Activated naive CD4-positive, alpha-beta T cell treated with anti-CD3 and anti-CD28 coated beads for 36 hours (primary cell): ENCODE measurements at regions of chr18 and their contacts with region 1.

Region 1: GRCh38 chr18:12702221-12703095 is at the starts of genes CEP76 and PSMG2:
- DNase-seq: peak; percentile 80
- H3K4me3 Mint-ChIP-seq: peak within 1 kb of the TSS; percentile 97
- H3K27ac Mint-ChIP-seq: peak within 1 kb of the TSS; percentile 97
- H3K4me1 Mint-ChIP-seq: peaks cover 41% of the 10 kb centered on the region
- H3K27me3 Mint-ChIP-seq: no peaks in the 10 kb centered on the region
- total RNA-seq, gene CEP76: 14.8 to 18.0 TPM
- total RNA-seq, gene PSMG2: 99.2 to 107 TPM

Region 2: DNA sequence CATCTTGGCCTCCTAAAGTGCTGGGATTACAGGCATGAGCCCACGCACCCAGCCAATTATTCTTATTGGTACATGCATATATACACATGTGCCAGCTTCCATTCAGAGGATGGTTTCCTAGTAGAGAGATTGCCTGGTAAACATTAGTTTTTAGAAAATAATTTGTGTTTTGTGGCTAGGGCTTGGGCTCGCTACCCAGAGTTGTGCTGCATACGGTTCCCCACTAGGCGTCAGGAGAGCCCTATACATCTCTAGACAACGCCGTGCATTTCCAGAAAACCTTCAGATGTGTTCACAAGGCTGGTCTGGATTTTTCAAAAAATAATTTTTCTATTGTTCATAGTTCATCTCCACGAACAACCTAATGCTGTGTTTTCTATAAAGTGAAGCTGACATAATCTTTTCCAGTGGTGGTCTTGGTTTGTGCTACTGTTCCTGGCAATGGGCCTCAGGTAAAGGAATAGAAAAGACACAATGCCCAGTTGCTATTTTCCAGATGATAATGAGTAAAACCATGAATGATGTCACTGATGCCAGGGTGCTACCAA is 310.8 kb before region 1 on chr18:
- CTCF ChIA-PET with region 1: interaction called, 4 read pairs
- intact Hi-C with region 1: loop called (anchors 5 kb)
- DNase-seq: peak; percentile 72
- H3K4me3 Mint-ChIP-seq: no peak overlapping the region
- H3K27ac Mint-ChIP-seq: no peak overlapping the region
- H3K4me1 Mint-ChIP-seq: no peaks in the 10 kb centered on the region
- H3K27me3 Mint-ChIP-seq: peaks cover 4% of the 10 kb centered on the region

Region 3: DNA sequence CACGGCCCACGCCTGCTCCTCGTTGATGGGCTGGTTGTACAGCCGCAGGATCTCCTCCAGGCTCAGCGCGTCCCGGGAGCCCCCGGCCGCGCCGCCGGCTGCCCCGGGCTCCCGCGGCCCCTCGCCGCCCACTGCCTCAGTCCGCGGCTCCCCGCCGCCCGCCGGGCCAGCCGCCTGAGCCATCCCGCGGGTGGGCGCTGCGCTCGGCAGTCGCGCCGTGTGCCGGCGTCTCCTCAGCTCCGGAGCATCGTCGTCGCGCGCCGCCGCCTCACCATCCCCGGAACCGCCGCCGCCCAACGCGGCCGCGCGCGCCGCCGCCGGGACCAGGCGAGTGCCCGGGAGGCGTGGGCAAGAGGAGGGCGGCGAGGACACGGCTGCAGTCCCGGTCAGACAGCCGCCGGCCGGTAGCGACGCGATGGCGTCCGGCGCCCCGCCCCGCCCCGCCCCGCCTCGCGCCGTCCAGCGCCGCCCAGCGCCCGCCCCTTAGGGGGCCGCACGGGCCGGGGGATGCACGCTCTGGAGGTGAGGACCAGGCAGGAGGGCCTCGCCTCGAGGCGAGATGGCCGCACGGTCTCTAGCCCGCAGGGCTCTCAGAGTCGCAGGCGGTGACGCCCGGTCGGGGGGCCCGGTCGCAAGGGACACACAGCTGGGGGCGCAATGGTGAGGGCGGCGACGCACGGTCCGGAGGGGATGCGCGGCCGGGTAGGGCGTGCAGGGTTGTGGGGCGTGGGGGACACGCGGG is 44.6 kb before region 1 on chr18 and contains the start of gene SPIRE1:
- CTCF ChIA-PET with region 1: no interaction called
- intact Hi-C with region 1: loop called (anchors 1 kb)
- DNase-seq: peak; percentile 34
- H3K4me3 Mint-ChIP-seq: peak within 1 kb of the TSS; percentile 76
- H3K27ac Mint-ChIP-seq: no peak within 1 kb of the TSS
- H3K4me1 Mint-ChIP-seq: peaks cover 7% of the 10 kb centered on the region
- H3K27me3 Mint-ChIP-seq: peaks cover 22% of the 10 kb centered on the region
- total RNA-seq, gene SPIRE1: 1.3 to 1.7 TPM

Region 4: DNA sequence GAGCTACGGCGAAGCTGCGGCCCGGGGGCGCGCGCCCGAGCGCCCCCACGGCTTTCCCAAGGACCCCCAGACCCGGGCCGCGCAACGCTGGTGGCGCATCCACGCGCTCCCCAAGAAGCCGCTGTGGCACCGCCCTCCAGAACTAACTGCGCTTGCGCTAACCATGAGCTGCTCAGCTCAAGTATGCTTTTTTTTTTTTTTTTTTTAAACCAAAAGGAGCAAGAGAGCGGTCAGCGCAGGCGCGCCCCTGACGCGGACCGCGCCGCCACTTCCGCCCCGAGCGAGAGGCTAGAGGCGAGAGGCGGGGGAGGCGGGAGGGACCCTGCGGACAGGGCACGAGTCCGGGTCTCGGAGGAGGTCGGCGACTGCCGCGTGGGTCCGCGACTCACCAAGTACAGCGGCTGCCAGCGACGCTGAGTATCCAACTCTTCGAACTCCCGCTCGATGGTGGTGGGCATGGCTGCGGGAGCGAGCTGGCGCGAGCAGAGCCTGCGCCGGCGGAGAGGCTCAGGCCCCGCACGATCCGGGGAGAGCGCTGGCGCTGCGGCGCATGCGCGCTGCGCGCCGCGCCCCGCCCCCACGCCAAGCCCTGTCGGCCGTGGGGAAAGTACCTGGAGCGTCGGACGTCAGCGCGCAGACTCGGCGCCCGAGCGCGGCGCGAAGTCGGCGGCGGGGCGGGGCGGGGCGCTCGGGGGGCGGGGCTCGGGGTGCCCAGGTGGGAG is 181.4 kb after region 1 on chr18 and contains the start of gene PTPN2:
- CTCF ChIA-PET with region 1: no interaction called
- intact Hi-C with region 1: loop called (anchors 1 kb)
- DNase-seq: peak; percentile 92
- H3K4me3 Mint-ChIP-seq: peak within 1 kb of the TSS; percentile 89
- H3K27ac Mint-ChIP-seq: peak within 1 kb of the TSS; percentile 90
- H3K4me1 Mint-ChIP-seq: peaks cover 53% of the 10 kb centered on the region
- H3K27me3 Mint-ChIP-seq: no peaks in the 10 kb centered on the region
- total RNA-seq, gene PTPN2: 68.5 to 71.8 TPM

Region 5: DNA sequence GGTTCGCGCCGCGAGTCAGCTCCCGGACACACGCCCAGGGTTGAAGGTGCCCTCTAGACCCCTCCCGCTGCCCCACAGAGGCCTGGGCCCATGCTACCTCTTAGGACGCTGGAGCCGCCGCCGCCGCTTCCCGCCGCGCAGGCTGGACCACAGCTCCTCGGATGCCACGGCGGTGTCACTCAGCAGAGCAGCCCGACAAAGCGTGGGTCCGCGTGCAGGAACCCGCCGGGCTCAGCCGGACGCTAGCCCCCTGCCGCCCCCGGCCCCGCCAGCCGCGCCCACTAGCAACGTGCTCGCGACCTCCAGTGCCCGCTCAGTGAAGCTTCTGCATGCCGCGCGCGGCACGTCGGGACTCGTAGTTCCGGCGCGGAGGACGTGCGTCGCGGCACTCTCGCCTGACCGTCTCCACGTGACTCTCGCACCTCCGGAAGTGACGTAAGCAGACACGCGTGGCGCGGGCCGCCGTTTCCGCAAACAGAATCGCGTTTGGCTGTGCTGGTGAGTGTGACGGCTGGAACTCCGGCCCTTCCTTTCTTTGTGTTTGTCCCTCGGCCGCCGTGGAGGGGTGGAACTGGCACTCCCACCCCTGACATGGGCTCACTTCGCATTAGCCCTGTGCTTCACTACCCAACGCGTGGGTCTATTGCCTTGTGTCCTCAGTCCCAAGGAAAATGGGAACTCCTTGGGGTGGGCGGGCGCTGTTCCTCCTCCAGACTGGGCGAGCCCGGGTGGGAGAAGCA is 1023.9 kb after region 1 on chr18 and contains the starts of genes FAM210A and RNMT:
- CTCF ChIA-PET with region 1: no interaction called
- intact Hi-C with region 1: loop called (anchors 2 kb)
- DNase-seq: peak; percentile 96
- H3K4me3 Mint-ChIP-seq: peak within 1 kb of the TSS; percentile 91
- H3K27ac Mint-ChIP-seq: peak within 1 kb of the TSS; percentile 89
- H3K4me1 Mint-ChIP-seq: peaks cover 46% of the 10 kb centered on the region
- H3K27me3 Mint-ChIP-seq: no peaks in the 10 kb centered on the region
- total RNA-seq, gene FAM210A: 18.6 to 20.2 TPM
- total RNA-seq, gene RNMT: 25.2 to 27.4 TPM